ENCODE measurements at regions of chr10 and their contacts with region 1.

Region 1: GRCh38 chr10:77533887-77534278 is 103.7 kb downstream of the KCNMA1 start:
- DNase-seq: peak in 1 of 2 donors; percentile 65
- H3K4me3 ChIP-seq: no peak overlapping the region
- H3K27ac ChIP-seq: peak overlapping the region; percentile 18 to 61
- H3K4me1 ChIP-seq: peaks cover 0 to 5% of the 10 kb centered on the region in 2 donors
- H3K27me3 ChIP-seq: no peaks in the 10 kb centered on the region
- CTCF ChIP-seq: no peak
- POLR2A ChIP-seq: no peak

Region 2: GRCh38 chr10:77405771-77406241 is 128.1 kb before region 1 on chr10:
- intact Hi-C with region 1: no loop called
- DNase-seq: peak; percentile 87 to 92
- H3K4me3 ChIP-seq: no peak overlapping the region
- H3K27ac ChIP-seq: peak overlapping the region; percentile 8 to 77
- H3K4me1 ChIP-seq: peaks cover 0 to 10% of the 10 kb centered on the region in 2 donors
- H3K27me3 ChIP-seq: no peaks in the 10 kb centered on the region
- CTCF ChIP-seq: no peak
- POLR2A ChIP-seq: no peak

Region 3: DNA sequence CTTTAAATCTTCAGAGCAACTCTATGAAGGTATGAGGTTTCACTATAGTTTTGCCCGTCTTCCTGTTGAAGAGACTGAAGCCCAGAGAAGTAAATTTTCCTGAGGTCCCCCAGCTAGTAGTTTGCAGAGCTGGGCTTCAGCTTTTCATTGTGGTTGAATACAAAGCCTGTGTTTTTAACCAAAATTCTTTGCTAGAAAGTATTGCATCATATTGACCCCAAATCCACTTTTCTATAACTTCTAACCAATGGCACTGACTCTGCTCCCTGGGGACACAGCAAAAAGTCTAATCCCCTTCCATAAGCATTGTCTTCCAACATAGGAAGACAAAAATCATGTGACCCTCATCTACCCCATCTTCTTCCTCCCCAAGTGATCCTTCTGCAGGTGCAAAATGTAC is 10.7 kb after region 1 on chr10:
- intact Hi-C with region 1: loop called (anchors 1 kb)
- DNase-seq: no peak
- H3K4me3 ChIP-seq: no peak overlapping the region
- H3K27ac ChIP-seq: no peak overlapping the region
- H3K4me1 ChIP-seq: no peaks in the 10 kb centered on the region
- H3K27me3 ChIP-seq: no peaks in the 10 kb centered on the region
- CTCF ChIP-seq: no peak
- POLR2A ChIP-seq: no peak

Region 4: GRCh38 chr10:78510566-78511323 is 976.9 kb after region 1 on chr10:
- intact Hi-C with region 1: no loop called
- DNase-seq: no peak
- H3K4me3 ChIP-seq: no peak overlapping the region
- H3K27ac ChIP-seq: peak overlapping the region in 1 of 2 donors; percentile 43
- H3K4me1 ChIP-seq: no peaks in the 10 kb centered on the region
- H3K27me3 ChIP-seq: no peaks in the 10 kb centered on the region
- CTCF ChIP-seq: no peak
- POLR2A ChIP-seq: no peak